ENCODE measurements at regions of chr1 and their contacts with region 1.

Region 1: DNA sequence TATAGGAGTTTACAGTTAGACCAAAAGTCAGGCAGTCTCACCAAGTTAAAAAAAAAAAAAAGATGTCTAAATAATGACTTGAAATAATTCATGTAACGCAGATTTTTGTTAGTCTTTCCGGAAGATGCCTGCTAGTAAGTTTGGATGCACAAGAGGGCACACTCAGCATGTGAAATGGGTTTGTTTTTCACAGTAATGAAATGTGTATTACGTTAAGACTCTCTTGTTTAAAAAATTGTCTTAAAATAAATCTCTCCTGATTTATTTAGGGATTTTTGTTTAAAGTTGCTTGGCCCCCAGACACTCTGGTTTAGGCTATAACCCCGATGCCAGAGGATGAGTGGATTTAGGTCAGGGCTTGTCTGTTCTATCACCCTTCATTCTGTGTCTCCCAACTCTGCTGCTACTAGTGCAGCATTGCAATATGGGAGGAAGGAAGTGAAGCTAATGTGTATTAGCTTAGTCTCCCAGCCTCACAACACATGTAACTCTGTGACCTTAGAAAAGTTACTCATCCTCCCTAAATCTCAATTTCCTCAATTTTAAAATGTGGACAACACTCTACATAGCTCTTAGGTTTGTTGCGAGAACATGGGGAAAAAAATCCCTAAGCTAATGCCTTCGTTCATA is 25.7 kb downstream of the CTH start:
- DNase-seq: no peak
- ATAC-seq: no peak

Region 2: DNA sequence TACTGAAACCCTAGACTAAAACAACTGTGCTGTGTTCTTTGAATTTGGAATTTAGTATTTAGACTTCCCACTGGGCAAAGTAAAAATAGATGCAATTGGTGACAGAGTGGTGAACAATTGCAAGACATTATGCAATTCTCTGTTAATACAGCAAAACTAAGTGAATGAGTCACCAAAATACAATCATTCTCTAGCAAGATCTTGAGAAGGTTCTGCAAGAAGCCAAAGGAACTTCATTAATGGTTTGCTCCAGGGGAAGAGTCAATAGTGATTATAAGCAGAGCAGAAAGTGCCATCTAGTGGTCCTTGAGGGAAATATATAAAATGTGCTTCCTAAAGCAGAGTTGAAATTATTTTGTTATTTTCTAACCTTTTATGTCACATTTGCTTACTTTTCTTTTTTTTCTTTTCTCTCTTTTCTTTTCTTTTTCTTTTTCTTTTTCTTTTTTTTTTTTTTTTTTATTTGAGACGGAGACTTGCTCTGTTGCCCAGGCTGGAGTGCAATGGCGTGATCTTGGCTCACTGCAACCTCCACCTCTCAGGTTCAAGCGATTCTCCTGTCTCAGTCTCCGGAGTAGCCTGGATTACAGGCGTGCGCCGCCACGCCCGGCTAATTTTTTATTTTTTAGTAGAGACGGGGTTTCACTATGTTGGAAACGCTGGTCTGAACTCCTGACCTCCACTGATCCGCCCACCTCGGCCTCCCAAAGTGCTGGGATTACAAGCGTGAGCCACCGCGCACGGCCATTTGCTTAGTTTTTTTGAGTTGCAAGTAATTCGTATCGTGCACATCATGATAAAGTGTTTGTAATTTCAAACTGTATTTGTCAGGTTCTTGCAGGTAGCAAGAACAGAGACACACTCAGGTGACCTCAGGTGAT is 73.5 kb after region 1 on chr1:
- intact Hi-C with region 1: loop called in 1 of 2 experiments (anchors 5 kb)
- DNase-seq: peak in 1 of 2 donors; percentile 9
- ATAC-seq: peak; percentile 90

Measured in left colon (tissue), 2 donors.